Activated T-helper 2 cell treated with anti-CD3 and anti-CD28 coated beads, Interferon-gamma antibody, Interleukin-2, Interleukin-4, amounts not matched to agents 10 μg/mL and 5 μg/mL and 100 μg/mL, durations not matched to agents 14 hours and 24 hours and 36 hours (primary cell): ENCODE measurements at regions of chr17 and their contacts with region 1.

Region 1: DNA sequence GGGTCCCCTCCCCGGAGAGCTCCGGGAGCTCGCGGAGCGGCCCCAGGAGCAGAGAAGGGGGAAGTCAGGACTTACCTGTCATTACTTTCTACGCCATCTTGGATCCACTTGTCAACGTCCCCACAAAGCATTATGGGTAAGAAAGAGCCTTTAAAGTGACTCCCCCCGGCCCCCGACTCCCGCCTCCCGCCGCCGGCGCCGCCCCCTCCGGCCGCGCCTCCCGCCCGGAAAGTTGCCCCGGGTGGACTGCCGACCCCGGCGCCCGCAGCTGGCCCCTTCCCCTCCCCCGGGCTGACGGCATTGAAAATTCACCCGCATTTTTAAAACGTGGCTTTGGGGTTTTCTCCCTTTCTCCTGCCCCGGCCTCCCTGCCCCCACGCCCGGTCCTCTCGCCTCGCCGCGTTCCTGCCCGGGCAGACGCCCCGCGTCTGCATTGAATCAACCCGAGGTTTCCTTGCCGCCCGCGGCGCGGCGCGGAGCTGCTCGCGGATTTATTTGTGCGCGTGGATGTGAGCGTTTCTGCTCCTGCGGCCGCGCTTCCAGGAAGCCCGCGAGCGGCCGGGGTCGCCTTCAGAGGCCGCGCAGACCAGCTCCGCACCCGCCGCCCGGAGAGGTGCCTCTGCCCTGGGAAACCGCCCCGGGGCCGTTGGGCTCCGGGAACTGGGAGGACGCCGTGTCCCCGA is at the start of gene HELZ:
- DNase-seq: peak; percentile 72
- H3K4me3 Mint-ChIP-seq: peak within 1 kb of the TSS; percentile 86
- H3K27ac Mint-ChIP-seq: peak within 1 kb of the TSS; percentile 75
- H3K4me1 Mint-ChIP-seq: peaks cover 40% of the 10 kb centered on the region
- H3K27me3 Mint-ChIP-seq: peaks cover 3% of the 10 kb centered on the region
- total RNA-seq, gene HELZ: 67.1 and 71.7 TPM in 2 replicates

Region 2: GRCh38 chr17:67035131-67036083 is 209.8 kb before region 1 on chr17:
- intact Hi-C with region 1: no loop called
- DNase-seq: no peak
- H3K4me3 Mint-ChIP-seq: no peak overlapping the region
- H3K27ac Mint-ChIP-seq: no peak overlapping the region
- H3K4me1 Mint-ChIP-seq: peaks cover 4% of the 10 kb centered on the region
- H3K27me3 Mint-ChIP-seq: no peaks in the 10 kb centered on the region

Region 3: GRCh38 chr17:67359960-67360773 is 115.0 kb after region 1 on chr17:
- intact Hi-C with region 1: loop called (anchors 10 kb)
- DNase-seq: peak; percentile 51
- H3K4me3 Mint-ChIP-seq: no peak overlapping the region
- H3K27ac Mint-ChIP-seq: peak overlapping the region; percentile 51
- H3K4me1 Mint-ChIP-seq: peaks cover 53% of the 10 kb centered on the region
- H3K27me3 Mint-ChIP-seq: no peaks in the 10 kb centered on the region